ENCODE measurements at regions of chr9 and their contacts with region 1.

Region 1: GRCh38 chr9:68802525-68803015 is 97.5 kb downstream of the PIP5K1B start:
- DNase-seq: no peak
- ATAC-seq: no peak
- H3K4me3 ChIP-seq: no peak overlapping the region
- H3K27ac ChIP-seq: no peak overlapping the region
- H3K4me1 ChIP-seq: peaks cover 16% of the 10 kb centered on the region
- H3K27me3 ChIP-seq: no peaks in the 10 kb centered on the region
- CTCF ChIP-seq: no peak

Region 2: DNA sequence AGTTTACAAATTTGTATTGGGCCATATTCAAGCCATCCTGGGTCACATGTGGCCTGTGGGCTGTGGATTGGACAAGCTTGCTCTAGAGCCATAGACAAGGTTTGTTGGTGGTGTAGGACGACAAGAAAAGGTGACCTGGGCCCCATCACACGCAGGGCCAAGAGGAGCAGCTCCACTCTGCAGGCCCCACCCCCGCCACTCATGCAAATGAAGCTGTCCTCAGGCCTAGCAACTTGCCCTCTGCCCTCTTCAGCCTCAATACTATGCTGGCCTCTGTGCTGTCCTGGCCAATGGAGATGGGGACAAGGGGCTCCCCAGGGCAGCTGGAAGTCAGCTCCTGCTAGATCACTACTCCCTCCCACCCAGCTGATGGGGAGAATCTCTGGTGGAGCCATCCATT is 206.7 kb before region 1 on chr9:
- intact Hi-C with region 1: loop called in 1 of 2 experiments (anchors 10 kb)
- DNase-seq: no peak
- ATAC-seq: no peak
- H3K4me3 ChIP-seq: no peak overlapping the region
- H3K27ac ChIP-seq: no peak overlapping the region
- H3K4me1 ChIP-seq: no peaks in the 10 kb centered on the region
- H3K27me3 ChIP-seq: peaks cover 0 to 3% (median 0%) of the 10 kb centered on the region in 3 donors
- CTCF ChIP-seq: no peak

Region 3: GRCh38 chr9:68851657-68852056 is 49.1 kb after region 1 on chr9:
- intact Hi-C with region 1: loop called in 1 of 2 experiments (anchors 10 kb)
- DNase-seq: no peak
- ATAC-seq: no peak
- H3K4me3 ChIP-seq: no peak overlapping the region
- H3K27ac ChIP-seq: no peak overlapping the region
- H3K4me1 ChIP-seq: no peaks in the 10 kb centered on the region
- H3K27me3 ChIP-seq: no peaks in the 10 kb centered on the region
- CTCF ChIP-seq: no peak

Region 4: GRCh38 chr9:68895741-68896478 is 93.3 kb after region 1 on chr9:
- intact Hi-C with region 1: loop called in 1 of 2 experiments (anchors 10 kb)
- DNase-seq: no peak
- ATAC-seq: no peak
- H3K4me3 ChIP-seq: no peak overlapping the region
- H3K27ac ChIP-seq: no peak overlapping the region
- H3K4me1 ChIP-seq: no peaks in the 10 kb centered on the region
- H3K27me3 ChIP-seq: no peaks in the 10 kb centered on the region
- CTCF ChIP-seq: no peak

Region 5: DNA sequence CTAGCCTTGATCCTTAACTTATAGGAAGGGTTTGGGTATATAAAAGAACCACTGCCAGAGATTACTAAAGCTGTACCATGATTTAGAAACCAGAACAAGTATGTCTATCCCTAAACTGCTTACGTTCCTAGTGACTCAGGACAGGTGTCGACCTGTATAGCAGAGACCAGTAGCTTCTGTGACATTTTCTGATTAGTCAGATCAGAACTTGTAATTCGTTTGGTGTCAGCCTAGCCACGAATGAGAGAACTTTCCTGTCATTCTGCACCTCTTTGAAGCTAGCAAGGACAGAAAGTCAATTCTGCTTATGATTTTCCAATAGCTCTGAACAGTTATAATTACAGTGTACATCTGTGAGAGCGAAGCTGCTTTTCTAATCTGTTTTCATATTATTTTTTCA is 171.9 kb after region 1 on chr9:
- intact Hi-C with region 1: loop called in 1 of 2 experiments (anchors 10 kb)
- DNase-seq: no peak
- ATAC-seq: no peak
- H3K4me3 ChIP-seq: no peak overlapping the region
- H3K27ac ChIP-seq: no peak overlapping the region
- H3K4me1 ChIP-seq: no peaks in the 10 kb centered on the region
- H3K27me3 ChIP-seq: no peaks in the 10 kb centered on the region
- CTCF ChIP-seq: no peak